ENCODE measurements at regions of chr9 and their contacts with region 1.

Region 1: GRCh38 chr9:122464633-122465567 is 12.8 kb downstream of the OR1J1 start:
- DNase-seq: peak; percentile 81
- ATAC-seq: peak; percentile 84
- H3K4me3 Mint-ChIP-seq: peak overlapping the region; percentile 68
- H3K27ac Mint-ChIP-seq: peak overlapping the region; percentile 79
- H3K4me1 Mint-ChIP-seq: peaks cover 14% of the 10 kb centered on the region
- H3K27me3 Mint-ChIP-seq: peaks cover 27% of the 10 kb centered on the region

Region 2: DNA sequence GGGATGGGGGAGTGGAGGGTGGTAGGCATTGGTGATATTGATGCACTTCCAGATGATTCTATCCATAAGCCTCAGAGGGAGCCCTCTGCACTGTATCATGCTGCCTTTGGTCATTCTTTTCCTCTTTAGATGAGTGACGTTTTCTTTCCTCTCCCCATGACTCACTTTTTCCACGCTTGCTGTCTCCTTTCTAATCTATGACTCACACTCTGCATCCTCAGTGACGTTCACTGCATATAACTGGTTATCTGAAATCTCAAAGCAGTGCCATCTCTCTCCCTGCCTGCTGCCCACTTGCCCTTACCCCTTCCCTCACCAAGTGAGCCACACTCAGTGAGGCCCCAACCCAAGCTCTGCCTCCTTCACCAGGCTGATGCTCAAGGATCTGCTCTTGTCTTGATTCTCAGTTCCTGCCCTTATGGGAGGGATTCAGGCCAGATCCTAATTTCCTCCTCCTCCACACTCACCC is 62.5 kb before region 1 on chr9:
- CTCF ChIA-PET with region 1: no interaction called
- POLR2A ChIA-PET with region 1: no interaction called
- intact Hi-C with region 1: loop called in 1 of 2 experiments (anchors 2 kb)
- DNase-seq: peak; percentile 76
- ATAC-seq: peak; percentile 96
- H3K4me3 Mint-ChIP-seq: peak overlapping the region; percentile 48
- H3K27ac Mint-ChIP-seq: peak overlapping the region; percentile 58
- H3K4me1 Mint-ChIP-seq: peaks cover 15% of the 10 kb centered on the region
- H3K27me3 Mint-ChIP-seq: peaks cover 19% of the 10 kb centered on the region

Region 3: DNA sequence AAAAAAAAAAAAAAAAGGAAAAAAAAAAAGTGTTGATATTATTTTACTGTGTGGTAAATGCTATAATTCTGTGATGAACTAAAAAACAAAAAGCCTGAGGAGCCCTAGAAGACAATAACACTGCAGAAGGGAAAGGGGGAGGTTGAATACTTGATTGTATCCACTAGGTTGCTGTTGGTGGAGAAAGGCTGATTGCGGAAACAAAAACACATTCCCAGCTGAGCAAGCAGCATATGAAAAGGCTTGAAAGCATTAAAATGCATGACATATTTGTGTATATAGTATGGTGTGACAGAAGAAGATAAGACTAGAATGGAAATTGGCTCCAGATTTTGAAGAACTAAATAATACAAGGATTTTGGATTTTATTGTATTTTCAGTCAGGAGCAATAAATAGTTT is 484.8 kb after region 1 on chr9:
- CTCF ChIA-PET with region 1: no interaction called
- POLR2A ChIA-PET with region 1: no interaction called
- intact Hi-C with region 1: loop called in 1 of 2 experiments (anchors 5 kb)
- DNase-seq: no peak
- ATAC-seq: no peak
- H3K4me3 Mint-ChIP-seq: no peak overlapping the region
- H3K27ac Mint-ChIP-seq: no peak overlapping the region
- H3K4me1 Mint-ChIP-seq: peaks cover 52% of the 10 kb centered on the region
- H3K27me3 Mint-ChIP-seq: no peaks in the 10 kb centered on the region

Region 4: GRCh38 chr9:123389070-123389469 is 924.2 kb after region 1 on chr9:
- CTCF ChIA-PET with region 1: no interaction called
- POLR2A ChIA-PET with region 1: no interaction called
- intact Hi-C with region 1: loop called in 1 of 2 experiments (anchors 10 kb)
- DNase-seq: no peak
- ATAC-seq: no peak
- H3K4me3 Mint-ChIP-seq: no peak overlapping the region
- H3K27ac Mint-ChIP-seq: no peak overlapping the region
- H3K4me1 Mint-ChIP-seq: no peaks in the 10 kb centered on the region
- H3K27me3 Mint-ChIP-seq: no peaks in the 10 kb centered on the region